K562 (cell line): ENCODE measurements at regions of chr3 and their contacts with region 1.

Region 1: GRCh38 chr3:126752303-126752842 is 48.3 kb downstream of the CHCHD6 start:
- DNase-seq: peak; percentile 66 to 76 (median 70)
- ATAC-seq: peak; percentile 100
- H3K4me3 ChIP-seq: no peak overlapping the region
- H3K27ac ChIP-seq: no peak overlapping the region; the same call in 2 of the 3 replicates
- H3K4me1 ChIP-seq: peaks cover 4 to 5% of the 10 kb centered on the region in 2 experiments; a peak in 4 of 5 replicates
- H3K27me3 ChIP-seq: no peaks in the 10 kb centered on the region
- CTCF ChIP-seq: peak; percentile 85 to 86 (median 85)
- EP300 ChIP-seq: no peak
- POLR2A ChIP-seq: no peak
- RAD21 ChIP-seq: peak; percentile 85 to 92

Region 2: GRCh38 chr3:126582311-126582710 is 170.1 kb before region 1 on chr3:
- CTCF ChIA-PET with region 1: no interaction called
- POLR2A ChIA-PET with region 1: no interaction called
- in situ Hi-C with region 1: no loop called
- intact Hi-C with region 1: no loop called
- DNase-seq: no peak
- ATAC-seq: no peak
- H3K4me3 ChIP-seq: no peak overlapping the region
- H3K27ac ChIP-seq: no peak overlapping the region
- H3K4me1 ChIP-seq: no peaks in the 10 kb centered on the region
- H3K27me3 ChIP-seq: peaks cover 0 to 8% of the 10 kb centered on the region in 2 experiments; a peak in 1 of 5 replicates
- CTCF ChIP-seq: no peak
- EP300 ChIP-seq: no peak
- POLR2A ChIP-seq: no peak
- RAD21 ChIP-seq: no peak

Region 3: DNA sequence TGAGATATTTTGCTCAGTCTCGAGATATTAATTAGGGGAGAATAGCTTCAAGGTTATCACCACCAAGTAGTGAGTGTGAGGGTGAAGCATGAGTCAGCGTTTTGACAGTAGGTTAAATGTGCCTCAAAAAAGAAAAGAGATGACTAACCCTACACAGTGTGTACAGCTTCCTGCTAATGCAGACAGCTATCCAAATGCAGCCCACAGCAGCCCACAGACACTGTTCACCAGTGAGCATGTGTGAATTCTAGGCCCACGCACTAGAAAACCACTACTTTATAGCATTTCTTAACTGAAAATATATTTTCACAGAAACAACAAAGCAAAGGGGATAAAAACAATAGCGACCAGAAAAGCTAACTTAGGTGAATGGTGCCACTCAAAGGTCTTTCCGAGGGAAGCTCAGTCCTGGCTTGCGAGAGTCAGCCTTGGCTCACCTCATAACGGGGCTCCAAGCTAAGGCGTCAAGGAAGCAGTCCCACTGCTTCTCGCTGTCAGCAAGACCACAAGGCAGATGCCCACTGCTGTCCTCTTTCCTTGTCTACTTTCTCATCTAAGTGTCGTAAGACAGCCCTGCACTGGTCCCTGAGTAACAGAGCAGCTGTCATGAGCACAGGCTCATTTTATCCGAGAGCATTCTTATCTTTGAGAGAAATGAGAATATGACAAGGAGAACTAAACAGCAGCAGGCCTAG is 145.0 kb before region 1 on chr3:
- CTCF ChIA-PET with region 1: no interaction called
- POLR2A ChIA-PET with region 1: no interaction called
- in situ Hi-C with region 1: no loop called
- intact Hi-C with region 1: no loop called
- DNase-seq: peak; percentile 6 to 59 (median 22)
- ATAC-seq: peak; percentile 90
- H3K4me3 ChIP-seq: no peak overlapping the region
- H3K27ac ChIP-seq: peak overlapping the region; percentile 40; the same call in 2 of the 3 replicates
- H3K4me1 ChIP-seq: peaks cover 5 to 12% of the 10 kb centered on the region in 2 experiments; a peak in 3 of 5 replicates
- H3K27me3 ChIP-seq: no peaks in the 10 kb centered on the region
- CTCF ChIP-seq: no peak
- EP300 ChIP-seq: no peak
- POLR2A ChIP-seq: no peak
- RAD21 ChIP-seq: no peak

Region 4: DNA sequence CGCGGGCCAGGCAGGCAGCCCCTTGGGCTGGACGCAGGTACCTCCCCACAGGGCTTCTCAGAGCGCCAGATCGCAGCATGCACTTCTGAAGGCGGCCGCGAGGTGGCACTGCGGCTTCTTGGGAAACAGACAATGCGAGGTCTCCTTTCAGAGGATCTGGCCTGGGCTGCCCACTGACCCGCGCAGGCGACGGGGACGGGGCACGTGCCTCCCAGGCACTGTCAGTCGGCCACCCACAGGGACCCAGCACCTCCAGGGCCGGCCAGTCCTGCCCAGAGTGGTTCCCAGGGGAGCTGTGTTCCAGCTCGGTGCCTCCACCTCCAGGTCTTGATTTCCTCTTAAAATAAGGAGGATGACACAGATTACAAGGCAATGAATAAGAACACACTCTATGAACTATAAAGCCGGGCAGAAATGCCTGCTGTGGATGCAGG is 73.0 kb before region 1 on chr3:
- CTCF ChIA-PET with region 1: no interaction called
- POLR2A ChIA-PET with region 1: no interaction called
- in situ Hi-C with region 1: no loop called
- intact Hi-C with region 1: loop called (anchors 5 kb)
- DNase-seq: peak; percentile 66 to 77 (median 70)
- ATAC-seq: peak; percentile 97
- H3K4me3 ChIP-seq: no peak overlapping the region
- H3K27ac ChIP-seq: no peak overlapping the region
- H3K4me1 ChIP-seq: peaks cover 0 to 10% of the 10 kb centered on the region in 2 experiments; a peak in 2 of 5 replicates
- H3K27me3 ChIP-seq: peaks cover 0 to 23% of the 10 kb centered on the region in 2 experiments; a peak in 2 of 5 replicates
- CTCF ChIP-seq: peak; percentile 70 to 79 (median 72)
- EP300 ChIP-seq: no peak
- POLR2A ChIP-seq: no peak
- RAD21 ChIP-seq: peak; percentile 69 to 82

Region 5: DNA sequence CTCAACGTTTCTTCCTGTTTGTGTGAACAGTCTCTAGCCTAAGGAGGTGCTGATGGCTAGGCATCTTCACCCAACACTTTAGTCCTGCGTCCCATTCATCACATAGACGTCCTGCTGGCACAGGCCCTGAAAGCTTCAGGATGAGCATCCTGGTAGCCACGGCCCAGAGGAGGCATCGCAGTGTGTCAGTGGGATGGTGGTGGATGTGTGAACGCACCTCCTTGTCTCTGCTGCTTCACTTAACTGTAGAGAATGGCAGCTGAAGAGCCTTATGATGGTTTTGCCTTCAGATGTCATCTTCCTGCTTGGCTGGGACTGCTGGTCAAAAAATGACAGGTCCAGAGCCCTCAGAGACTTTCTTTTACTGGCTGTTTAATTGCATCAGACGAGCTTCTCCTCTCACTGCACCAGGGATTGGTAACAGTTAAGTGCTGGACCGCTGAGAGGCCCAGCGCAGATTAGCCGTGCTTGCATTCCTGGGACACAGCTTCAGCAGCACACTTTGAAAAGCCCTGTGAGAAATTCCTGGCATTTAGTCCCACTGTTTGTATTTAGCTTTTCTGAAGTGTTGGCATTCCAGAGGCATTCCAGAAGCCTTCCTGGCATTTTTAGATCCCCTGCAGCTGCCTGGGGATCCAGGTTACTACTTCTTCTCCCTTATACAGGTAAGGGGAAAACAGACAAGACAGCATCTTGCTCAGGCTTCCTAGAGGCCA is 98.2 kb after region 1 on chr3:
- CTCF ChIA-PET with region 1: no interaction called
- POLR2A ChIA-PET with region 1: no interaction called
- in situ Hi-C with region 1: no loop called
- intact Hi-C with region 1: loop called (anchors 5 kb)
- DNase-seq: no peak
- ATAC-seq: no peak
- H3K4me3 ChIP-seq: no peak overlapping the region
- H3K27ac ChIP-seq: no peak overlapping the region
- H3K4me1 ChIP-seq: peaks cover 0 to 8% of the 10 kb centered on the region in 2 experiments; a peak in 4 of 5 replicates
- H3K27me3 ChIP-seq: no peaks in the 10 kb centered on the region
- CTCF ChIP-seq: no peak
- EP300 ChIP-seq: no peak
- POLR2A ChIP-seq: no peak
- RAD21 ChIP-seq: no peak